Esophagus squamous epithelium (tissue), 5 donors: ENCODE measurements at regions of chr15 and their contacts with region 1.

Region 1: GRCh38 chr15:59543721-59544547 is 67.6 kb upstream of the GCNT3 start:
- DNase-seq: no peak
- H3K4me3 ChIP-seq: no peak overlapping the region
- H3K27ac ChIP-seq: no peak overlapping the region
- H3K4me1 ChIP-seq: peaks cover 0 to 7% (median 0%) of the 10 kb centered on the region in 3 donors
- H3K27me3 ChIP-seq: peaks cover 0 to 77% (median 0%) of the 10 kb centered on the region in 4 donors
- CTCF ChIP-seq: no peak
- POLR2A ChIP-seq: no peak

Region 2: GRCh38 chr15:59611276-59612260 is 67.6 kb after region 1 on chr15 and contains the start of gene GCNT3:
- intact Hi-C with region 1: loop called (anchors 10 kb)
- DNase-seq: no peak
- H3K4me3 ChIP-seq: no peak within 1 kb of the TSS
- H3K27ac ChIP-seq: peak within 1 kb of the TSS in 1 of 4 donors; percentile 50
- H3K4me1 ChIP-seq: peaks cover 0 to 32% (median 0%) of the 10 kb centered on the region in 3 donors
- H3K27me3 ChIP-seq: peaks cover 0 to 10% (median 0%) of the 10 kb centered on the region in 4 donors
- CTCF ChIP-seq: no peak
- POLR2A ChIP-seq: no peak
- total RNA-seq, gene GCNT3: 8.8 to 30.2 (median 18.1) TPM